ENCODE measurements at regions of chr7 and their contacts with region 1.

Region 1: GRCh38 chr7:25851332-25852210 is 300.4 kb upstream of the NFE2L3 start:
- DNase-seq: peak; percentile 85
- ATAC-seq: peak; percentile 73

Region 2: DNA sequence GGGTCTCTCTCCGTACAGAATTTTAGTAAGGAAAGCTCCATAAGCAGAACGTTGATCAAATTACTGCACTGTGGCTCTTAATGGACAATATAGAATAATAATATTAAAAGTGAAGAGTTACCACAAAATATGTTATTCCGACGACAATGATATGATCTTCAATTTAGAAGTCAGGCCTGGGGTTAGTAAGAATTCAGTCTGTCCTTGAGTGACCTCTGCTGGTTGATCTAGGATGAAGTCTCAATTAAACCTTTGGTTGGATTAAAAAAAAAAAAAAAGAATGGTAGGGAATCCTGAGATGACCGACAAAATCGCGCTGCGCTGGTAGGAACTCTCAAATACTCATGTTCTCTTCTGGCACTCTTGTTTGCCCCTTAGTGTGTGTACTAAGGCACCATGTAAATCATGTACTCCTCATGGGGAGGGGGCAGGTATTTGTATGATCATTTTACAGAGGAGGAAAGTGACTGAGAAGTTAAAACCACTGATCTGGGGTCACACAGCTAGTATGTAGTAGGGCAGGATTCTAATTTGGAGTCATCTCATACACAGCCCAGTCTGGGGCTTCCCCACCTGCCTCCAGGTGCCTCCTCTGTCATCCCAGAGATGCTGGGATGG is 462.0 kb before region 1 on chr7:
- intact Hi-C with region 1: loop called (anchors 1 kb)
- DNase-seq: no peak
- ATAC-seq: peak; percentile 27

Region 3: GRCh38 chr7:25565949-25566348 is 285.6 kb before region 1 on chr7:
- intact Hi-C with region 1: loop called (anchors 2 kb)
- DNase-seq: peak; percentile 73
- ATAC-seq: no peak

Region 4: DNA sequence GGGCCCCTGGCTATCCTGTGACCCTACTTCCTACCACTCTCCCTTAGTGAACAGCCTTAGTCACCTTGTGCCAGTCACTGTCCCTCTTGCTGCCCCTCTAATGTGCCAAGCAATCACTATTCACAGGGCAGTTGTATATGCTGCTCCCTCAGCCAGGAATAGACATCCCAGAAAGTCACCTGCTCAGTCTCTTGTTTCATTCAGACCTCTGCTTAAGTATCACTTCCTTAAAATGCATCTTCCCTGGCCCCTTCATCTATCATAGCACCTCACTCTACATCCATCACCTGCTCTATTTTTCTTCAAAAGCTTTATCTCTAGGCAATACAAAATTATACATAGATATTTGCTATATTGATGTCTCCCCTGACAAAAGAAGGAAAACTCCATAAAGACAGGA is 28.0 kb before region 1 on chr7:
- intact Hi-C with region 1: no loop called
- DNase-seq: no peak
- ATAC-seq: no peak

Region 5: DNA sequence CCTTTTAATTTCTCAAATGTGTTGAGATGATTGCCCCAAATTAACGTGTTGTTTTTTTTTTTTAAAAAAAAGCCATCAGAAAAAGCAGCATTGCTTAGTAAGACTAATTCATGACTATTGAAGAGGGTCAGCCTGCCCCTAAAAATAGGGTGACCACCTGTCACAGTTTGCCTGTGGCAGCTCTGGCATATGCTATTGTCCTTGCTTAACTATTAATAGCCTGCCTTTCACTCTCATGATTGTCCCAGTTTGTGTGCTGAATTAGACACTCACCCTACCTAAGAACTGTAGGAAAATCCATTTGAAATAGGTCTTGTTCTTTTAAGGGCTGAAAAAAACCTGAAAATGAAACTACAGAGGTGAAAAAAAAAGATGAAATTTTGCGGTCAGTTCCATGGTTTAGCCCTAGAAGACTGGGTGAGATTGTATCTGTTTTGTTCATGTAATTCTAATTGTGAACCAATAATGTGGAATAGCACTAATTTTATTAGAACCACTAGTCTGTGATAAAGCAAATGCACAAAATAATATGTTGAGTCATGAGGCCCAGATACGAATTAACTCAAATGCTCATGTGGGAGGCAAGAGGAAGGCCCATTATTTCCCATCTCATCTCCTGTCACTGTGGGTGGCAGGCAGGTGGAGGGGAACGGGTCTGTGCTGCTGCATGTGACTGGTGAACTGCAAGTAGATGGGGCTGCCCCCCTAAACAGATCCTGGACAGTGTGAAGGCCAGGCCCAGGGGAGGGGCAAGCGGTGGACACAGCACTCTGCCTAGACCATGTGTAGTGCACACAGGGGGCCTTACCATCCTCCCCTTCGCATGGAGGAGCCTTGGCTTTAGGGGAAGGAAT is 35.0 kb after region 1 on chr7:
- intact Hi-C with region 1: no loop called
- DNase-seq: no peak
- ATAC-seq: peak; percentile 66

Region 6: DNA sequence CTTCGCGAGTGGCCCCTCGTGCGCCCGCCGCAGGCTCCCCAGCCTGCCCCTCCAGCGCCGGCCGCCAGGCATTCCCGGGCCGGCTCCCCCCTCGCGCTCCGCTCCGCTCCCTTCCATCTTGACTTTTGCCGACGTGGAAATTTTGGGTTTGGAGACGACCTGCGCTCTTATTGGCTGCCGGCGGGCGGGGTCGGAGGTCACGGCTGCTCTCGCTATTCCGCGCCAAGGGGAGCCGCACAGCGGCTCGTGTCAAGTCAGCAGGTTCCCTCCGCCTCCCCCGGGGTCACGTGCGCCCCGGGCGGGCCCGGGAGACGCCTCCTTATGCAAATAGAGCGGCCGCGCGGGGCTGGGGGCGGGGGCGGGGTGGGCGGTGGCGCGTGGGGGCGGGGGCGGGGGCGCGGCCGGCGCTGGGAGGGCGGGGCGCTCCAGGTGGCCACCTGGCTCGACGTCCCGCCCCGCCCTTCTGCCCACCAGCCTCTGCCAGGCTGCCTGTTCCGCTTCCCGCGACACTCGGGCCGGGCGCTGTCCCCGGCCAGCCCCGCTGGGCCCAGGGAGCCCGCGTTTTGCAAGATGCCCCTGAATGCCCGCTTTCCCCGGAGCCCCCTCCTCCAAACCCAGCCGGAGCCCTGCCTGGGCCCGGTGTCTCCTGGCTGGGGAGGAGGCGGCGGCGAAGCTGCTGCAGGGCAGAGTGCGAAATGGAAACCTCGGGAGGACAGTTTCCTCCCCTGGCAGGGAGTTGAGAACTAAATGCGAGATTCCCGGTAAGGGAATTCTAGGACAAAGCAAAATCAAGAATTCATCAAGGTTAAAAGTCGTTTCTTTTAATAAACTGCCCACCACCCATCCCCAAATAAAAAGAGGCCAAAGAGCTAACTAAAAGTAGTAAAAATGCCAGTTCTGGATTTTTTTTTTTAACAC is 99.7 kb after region 1 on chr7:
- intact Hi-C with region 1: no loop called
- DNase-seq: peak; percentile 95
- ATAC-seq: peak; percentile 96

Measured in Right ventricle myocardium inferior (tissue), 1 donor.